PC-9 (cell line): ENCODE measurements at regions of chr20 and their contacts with region 1.

Region 1: DNA sequence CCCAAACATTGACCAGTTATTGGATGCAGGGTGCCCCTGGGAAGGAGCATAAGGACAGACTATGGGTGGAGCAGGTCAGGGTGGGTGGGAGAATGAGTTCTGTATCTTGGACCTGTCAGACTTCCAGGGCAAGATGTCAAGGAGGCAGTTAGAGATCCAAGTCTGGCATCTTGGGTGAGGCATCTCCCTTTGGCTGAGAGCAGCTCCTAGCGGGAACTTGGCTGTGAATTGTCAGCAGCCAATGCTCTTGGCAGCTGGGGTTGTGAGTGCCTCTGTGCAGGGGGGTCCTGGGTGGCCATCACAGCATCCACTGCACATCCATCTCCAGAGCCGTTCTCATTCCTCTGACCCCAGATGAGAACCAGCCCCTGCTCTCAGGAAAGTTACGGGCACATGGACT is 117.0 kb upstream of the MYL9 start:
- DNase-seq: no peak
- H3K4me3 ChIP-seq: no peak overlapping the region
- H3K27ac ChIP-seq: no peak overlapping the region
- H3K4me1 ChIP-seq: no peaks in the 10 kb centered on the region
- H3K27me3 ChIP-seq: peaks cover 30% of the 10 kb centered on the region
- CTCF ChIP-seq: no peak

Region 2: GRCh38 chr20:36454698-36455427 is 30.5 kb after region 1 on chr20:
- CTCF ChIA-PET with region 1: no interaction called
- POLR2A ChIA-PET with region 1: interaction called, 14 read pairs
- intact Hi-C with region 1: no loop called
- DNase-seq: peak in 1 of 2 experiments; percentile 58
- H3K4me3 ChIP-seq: no peak overlapping the region
- H3K27ac ChIP-seq: no peak overlapping the region
- H3K4me1 ChIP-seq: peaks cover 7% of the 10 kb centered on the region
- H3K27me3 ChIP-seq: no peaks in the 10 kb centered on the region
- CTCF ChIP-seq: no peak